ENCODE measurements at regions of chr17 and their contacts with region 1.

Region 1: DNA sequence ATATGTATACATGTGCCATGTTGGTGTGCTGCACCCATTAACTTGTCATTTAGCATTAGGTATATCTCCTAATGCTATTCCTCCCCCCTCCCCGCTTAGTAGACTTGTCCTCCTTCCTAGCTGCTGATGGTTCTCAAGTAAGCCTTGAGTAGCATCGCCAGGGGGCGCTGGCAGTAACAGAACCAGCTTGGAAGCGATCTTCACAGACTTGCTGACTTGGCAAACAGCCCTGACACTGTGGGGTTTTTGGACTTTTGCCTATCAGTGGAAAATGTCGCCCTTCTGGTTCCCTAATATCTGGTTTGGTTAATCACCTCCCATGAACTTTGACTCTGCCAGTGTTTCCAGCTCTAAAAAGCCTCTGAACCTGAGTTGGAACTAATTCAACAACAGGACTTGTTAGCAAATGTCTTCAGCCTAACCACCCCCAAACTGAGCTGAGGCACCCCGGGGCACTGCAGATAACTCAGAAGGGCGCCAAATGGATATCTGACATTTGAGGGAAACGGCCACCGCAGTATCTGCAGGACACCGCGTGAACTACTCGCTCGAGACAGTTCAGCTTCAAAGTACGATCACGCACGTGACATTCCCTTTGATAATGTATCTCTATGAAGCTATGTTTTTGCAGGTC is 15.4 kb upstream of the SPATA32 start:
- DNase-seq: peak; percentile 86 to 95
- ATAC-seq: peak; percentile 93 to 99 (median 99)
- H3K4me3 ChIP-seq: no peak overlapping the region
- H3K4me3 Mint-ChIP-seq: no peak overlapping the region
- H3K27ac ChIP-seq: no peak overlapping the region
- H3K27ac Mint-ChIP-seq: peak overlapping the region in 1 of 2 donors; percentile 66
- H3K4me1 ChIP-seq: no peaks in the 10 kb centered on the region
- H3K4me1 Mint-ChIP-seq: peaks cover 0 to 5% of the 10 kb centered on the region in 2 donors
- H3K27me3 ChIP-seq: no peaks in the 10 kb centered on the region
- H3K27me3 Mint-ChIP-seq: no peaks in the 10 kb centered on the region
- CTCF ChIP-seq: peak; percentile 72

Region 2: GRCh38 chr17:45235416-45236281 is 41.7 kb before region 1 on chr17:
- intact Hi-C with region 1: no loop called
- DNase-seq: peak; percentile 74 to 93
- ATAC-seq: peak; percentile 64 to 69 (median 66)
- H3K4me3 ChIP-seq: no peak overlapping the region
- H3K4me3 Mint-ChIP-seq: no peak overlapping the region
- H3K27ac ChIP-seq: peak overlapping the region; percentile 13
- H3K27ac Mint-ChIP-seq: peak overlapping the region; percentile 86 to 99
- H3K4me1 ChIP-seq: peaks cover 47% of the 10 kb centered on the region
- H3K4me1 Mint-ChIP-seq: peaks cover 53 to 73% of the 10 kb centered on the region in 2 donors
- H3K27me3 ChIP-seq: no peaks in the 10 kb centered on the region
- H3K27me3 Mint-ChIP-seq: no peaks in the 10 kb centered on the region
- CTCF ChIP-seq: peak; percentile 80

Region 3: GRCh38 chr17:45311760-45312476 is 34.6 kb after region 1 on chr17:
- intact Hi-C with region 1: loop called (anchors 2 kb)
- DNase-seq: peak; percentile 59 to 84
- ATAC-seq: peak; percentile 27 to 46 (median 42)
- H3K4me3 ChIP-seq: peak overlapping the region; percentile 2
- H3K4me3 Mint-ChIP-seq: peak overlapping the region; percentile 42
- H3K27ac ChIP-seq: peak overlapping the region; percentile 86
- H3K27ac Mint-ChIP-seq: peak overlapping the region; percentile 91 to 92
- H3K4me1 ChIP-seq: peaks cover 81% of the 10 kb centered on the region
- H3K4me1 Mint-ChIP-seq: peaks cover 74 to 83% of the 10 kb centered on the region in 2 donors
- H3K27me3 ChIP-seq: no peaks in the 10 kb centered on the region
- H3K27me3 Mint-ChIP-seq: no peaks in the 10 kb centered on the region
- CTCF ChIP-seq: no peak

Region 4: GRCh38 chr17:45385331-45385997 is 108.1 kb after region 1 on chr17:
- intact Hi-C with region 1: loop called (anchors 1 kb)
- DNase-seq: peak; percentile 86 to 93
- ATAC-seq: peak; percentile 90 to 98 (median 97)
- H3K4me3 ChIP-seq: no peak overlapping the region
- H3K4me3 Mint-ChIP-seq: no peak overlapping the region
- H3K27ac ChIP-seq: no peak overlapping the region
- H3K27ac Mint-ChIP-seq: no peak overlapping the region
- H3K4me1 ChIP-seq: peaks cover 7% of the 10 kb centered on the region
- H3K4me1 Mint-ChIP-seq: peaks cover 0 to 6% of the 10 kb centered on the region in 2 donors
- H3K27me3 ChIP-seq: no peaks in the 10 kb centered on the region
- H3K27me3 Mint-ChIP-seq: peaks cover 6 to 22% of the 10 kb centered on the region in 2 donors
- CTCF ChIP-seq: peak; percentile 94

Measured in natural killer cell (primary cell).